Activated CD8-positive, alpha-beta T cell treated with anti-CD3 and anti-CD28 coated beads for 36 hours (primary cell): ENCODE measurements at regions of chr1 and their contacts with region 1.

Region 1: DNA sequence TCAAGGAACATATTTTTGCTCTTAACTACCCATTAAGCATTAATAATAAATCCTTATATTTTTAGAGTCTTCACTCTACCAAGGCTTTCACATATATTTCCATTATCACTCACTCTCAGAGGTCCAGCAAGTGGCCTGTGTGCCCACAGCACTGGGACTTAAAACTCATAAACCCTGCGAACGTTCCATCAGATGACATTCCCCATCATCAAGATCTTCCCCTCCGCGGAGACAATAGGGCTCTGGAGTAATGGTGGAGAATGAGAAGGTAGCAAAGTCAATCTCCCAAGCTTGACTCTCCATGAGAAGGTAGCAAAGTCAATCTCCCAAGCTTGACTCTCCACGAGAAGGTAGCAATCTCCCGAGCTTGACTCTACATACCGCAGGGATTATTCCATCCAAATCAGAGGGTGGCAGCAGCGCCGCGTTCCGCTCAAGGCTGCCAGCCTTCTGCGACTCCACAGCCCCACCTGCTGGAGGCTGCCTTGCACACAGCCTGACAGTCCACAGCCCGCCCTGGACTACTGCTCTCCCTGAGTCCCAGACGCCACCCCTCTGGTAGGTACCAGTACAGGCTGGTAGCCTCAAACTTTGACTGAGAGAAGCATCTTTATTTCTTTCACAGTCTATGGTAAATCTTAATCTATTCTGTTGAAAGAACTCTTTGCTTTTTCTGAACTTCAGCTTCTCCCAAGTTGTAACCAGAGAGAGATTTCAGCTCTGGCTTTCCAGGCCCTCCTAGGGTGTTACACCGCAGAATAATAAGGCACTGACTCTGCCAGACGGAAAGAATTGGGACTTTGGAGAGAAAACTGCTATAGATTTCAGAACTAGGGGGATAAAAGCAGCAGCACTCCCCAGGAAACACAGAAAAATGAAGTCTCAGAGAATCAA is 26.4 kb upstream of the CTTNBP2NL start:
- DNase-seq: peak; percentile 90
- ATAC-seq: peak; percentile 100
- H3K4me3 Mint-ChIP-seq: no peak overlapping the region
- H3K27ac Mint-ChIP-seq: no peak overlapping the region
- H3K4me1 Mint-ChIP-seq: peaks cover 3% of the 10 kb centered on the region
- H3K27me3 Mint-ChIP-seq: peaks cover 31% of the 10 kb centered on the region
- CTCF ChIP-seq: peak; percentile 95

Region 2: DNA sequence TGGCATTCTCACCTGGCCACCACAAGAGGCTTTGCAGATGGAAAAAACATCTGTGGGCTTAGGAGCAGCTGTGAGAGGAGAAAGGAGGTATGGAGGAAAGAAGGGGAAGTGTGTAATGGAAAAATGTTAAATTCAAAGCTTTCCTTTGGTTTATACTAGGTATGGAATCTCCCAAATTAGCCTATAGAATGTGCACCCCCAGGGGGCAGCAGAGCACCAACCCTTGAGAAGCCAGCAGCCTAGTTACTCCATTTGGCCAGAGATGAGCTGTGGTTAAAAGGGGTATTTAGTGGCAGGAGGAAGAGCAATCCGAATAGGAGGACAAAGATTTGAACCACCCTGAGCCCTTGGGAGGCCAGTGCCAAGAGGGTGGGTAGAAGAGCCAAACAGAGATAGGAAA is 71.1 kb before region 1 on chr1:
- CTCF ChIA-PET with region 1: interaction called, 12 read pairs
- POLR2A ChIA-PET with region 1: no interaction called
- intact Hi-C with region 1: no loop called
- DNase-seq: peak; percentile 67
- ATAC-seq: no peak
- H3K4me3 Mint-ChIP-seq: no peak overlapping the region
- H3K27ac Mint-ChIP-seq: no peak overlapping the region
- H3K4me1 Mint-ChIP-seq: no peaks in the 10 kb centered on the region
- H3K27me3 Mint-ChIP-seq: peaks cover 6% of the 10 kb centered on the region
- CTCF ChIP-seq: no peak

Region 3: DNA sequence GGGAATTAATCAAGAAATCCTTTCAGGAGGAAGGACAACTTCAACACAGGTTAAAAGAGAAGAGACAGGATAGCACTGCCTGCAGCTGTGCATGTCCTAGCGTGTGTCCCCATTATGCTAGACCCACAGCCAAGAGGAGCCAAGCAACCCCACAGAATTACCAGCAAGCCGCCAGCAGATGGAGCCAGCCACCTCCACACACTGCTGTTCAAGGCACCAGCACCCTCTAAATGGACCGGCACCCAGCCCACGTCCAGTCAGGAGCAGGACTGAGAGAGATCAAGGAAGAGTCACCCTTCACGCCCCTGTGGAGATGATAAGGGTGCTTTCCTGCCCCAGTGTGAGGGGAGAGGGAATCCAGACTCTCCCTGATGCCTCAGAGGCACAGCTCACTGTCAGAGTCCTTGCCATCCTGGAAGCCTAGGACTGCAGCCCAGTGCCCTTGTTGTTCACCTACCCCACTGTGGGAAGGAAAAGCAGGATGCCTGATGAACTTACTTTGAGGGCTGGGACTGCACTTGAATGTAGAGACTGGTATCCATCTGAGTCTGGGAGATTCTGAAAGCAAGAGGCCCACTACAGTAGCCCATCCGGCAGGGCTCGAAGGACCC is 10.7 kb before region 1 on chr1:
- CTCF ChIA-PET with region 1: interaction called, 81 read pairs
- POLR2A ChIA-PET with region 1: no interaction called
- intact Hi-C with region 1: no loop called
- DNase-seq: peak; percentile 54
- ATAC-seq: peak; percentile 66
- H3K4me3 Mint-ChIP-seq: no peak overlapping the region
- H3K27ac Mint-ChIP-seq: no peak overlapping the region
- H3K4me1 Mint-ChIP-seq: no peaks in the 10 kb centered on the region
- H3K27me3 Mint-ChIP-seq: peaks cover 21% of the 10 kb centered on the region
- CTCF ChIP-seq: peak; percentile 68

Region 4: GRCh38 chr1:112381324-112382076 is 11.9 kb after region 1 on chr1:
- CTCF ChIA-PET with region 1: interaction called, 16 read pairs
- POLR2A ChIA-PET with region 1: no interaction called
- intact Hi-C with region 1: no loop called
- DNase-seq: no peak
- ATAC-seq: no peak
- H3K4me3 Mint-ChIP-seq: no peak overlapping the region
- H3K27ac Mint-ChIP-seq: no peak overlapping the region
- H3K4me1 Mint-ChIP-seq: no peaks in the 10 kb centered on the region
- H3K27me3 Mint-ChIP-seq: peaks cover 32% of the 10 kb centered on the region
- CTCF ChIP-seq: no peak

Region 5: GRCh38 chr1:112418099-112418892 is 48.7 kb after region 1 on chr1:
- CTCF ChIA-PET with region 1: no interaction called
- POLR2A ChIA-PET with region 1: no interaction called
- intact Hi-C with region 1: no loop called
- DNase-seq: no peak
- ATAC-seq: no peak
- H3K4me3 Mint-ChIP-seq: no peak overlapping the region
- H3K27ac Mint-ChIP-seq: no peak overlapping the region
- H3K4me1 Mint-ChIP-seq: no peaks in the 10 kb centered on the region
- H3K27me3 Mint-ChIP-seq: no peaks in the 10 kb centered on the region
- CTCF ChIP-seq: no peak

Region 6: GRCh38 chr1:112651205-112651604 is 281.6 kb after region 1 on chr1:
- CTCF ChIA-PET with region 1: no interaction called
- POLR2A ChIA-PET with region 1: no interaction called
- intact Hi-C with region 1: no loop called
- DNase-seq: no peak
- ATAC-seq: no peak
- H3K4me3 Mint-ChIP-seq: no peak overlapping the region
- H3K27ac Mint-ChIP-seq: peak overlapping the region; percentile 56
- H3K4me1 Mint-ChIP-seq: peaks cover 27% of the 10 kb centered on the region
- H3K27me3 Mint-ChIP-seq: no peaks in the 10 kb centered on the region
- CTCF ChIP-seq: no peak